ENCODE measurements at regions of chr4 and their contacts with region 1.

Region 1: GRCh38 chr4:55736605-55737183 is 82.9 kb upstream of the EXOC1L start:
- DNase-seq: peak; percentile 27
- H3K4me3 Mint-ChIP-seq: no peak overlapping the region
- H3K27ac Mint-ChIP-seq: no peak overlapping the region
- H3K4me1 Mint-ChIP-seq: peaks cover 11% of the 10 kb centered on the region
- H3K27me3 Mint-ChIP-seq: no peaks in the 10 kb centered on the region
- CTCF ChIP-seq: peak; percentile 47

Region 2: GRCh38 chr4:55312489-55313101 is 424.1 kb before region 1 on chr4:
- CTCF ChIA-PET with region 1: interaction called, 5 read pairs
- POLR2A ChIA-PET with region 1: no interaction called
- intact Hi-C with region 1: loop called (anchors 10 kb)
- DNase-seq: peak; percentile 65
- H3K4me3 Mint-ChIP-seq: no peak overlapping the region
- H3K27ac Mint-ChIP-seq: no peak overlapping the region
- H3K4me1 Mint-ChIP-seq: no peaks in the 10 kb centered on the region
- H3K27me3 Mint-ChIP-seq: no peaks in the 10 kb centered on the region
- CTCF ChIP-seq: peak; percentile 52

Region 3: DNA sequence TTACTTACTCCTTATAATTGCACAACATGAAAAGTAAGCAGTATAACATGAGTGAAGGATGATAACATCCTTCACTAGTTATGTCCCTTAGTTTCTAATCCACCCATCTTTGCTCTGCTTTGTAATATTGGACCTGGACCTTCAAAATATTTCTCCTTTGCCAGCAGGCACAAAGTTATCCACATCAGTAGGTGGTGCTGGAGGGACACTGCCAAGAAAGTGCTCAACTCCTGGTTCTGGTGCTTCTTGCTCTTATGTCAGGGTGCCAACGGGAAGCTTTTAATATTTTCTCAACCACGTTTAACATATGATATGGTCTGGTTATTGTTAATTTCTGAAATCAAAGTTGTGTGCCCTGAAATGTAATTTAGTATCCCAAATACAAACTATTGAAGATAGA is 291.9 kb before region 1 on chr4:
- CTCF ChIA-PET with region 1: interaction called, 22 read pairs
- POLR2A ChIA-PET with region 1: interaction called, 3 read pairs
- intact Hi-C with region 1: loop called (anchors 1 kb)
- DNase-seq: peak; percentile 43
- H3K4me3 Mint-ChIP-seq: no peak overlapping the region
- H3K27ac Mint-ChIP-seq: no peak overlapping the region
- H3K4me1 Mint-ChIP-seq: peaks cover 6% of the 10 kb centered on the region
- H3K27me3 Mint-ChIP-seq: no peaks in the 10 kb centered on the region
- CTCF ChIP-seq: peak; percentile 55

Region 4: DNA sequence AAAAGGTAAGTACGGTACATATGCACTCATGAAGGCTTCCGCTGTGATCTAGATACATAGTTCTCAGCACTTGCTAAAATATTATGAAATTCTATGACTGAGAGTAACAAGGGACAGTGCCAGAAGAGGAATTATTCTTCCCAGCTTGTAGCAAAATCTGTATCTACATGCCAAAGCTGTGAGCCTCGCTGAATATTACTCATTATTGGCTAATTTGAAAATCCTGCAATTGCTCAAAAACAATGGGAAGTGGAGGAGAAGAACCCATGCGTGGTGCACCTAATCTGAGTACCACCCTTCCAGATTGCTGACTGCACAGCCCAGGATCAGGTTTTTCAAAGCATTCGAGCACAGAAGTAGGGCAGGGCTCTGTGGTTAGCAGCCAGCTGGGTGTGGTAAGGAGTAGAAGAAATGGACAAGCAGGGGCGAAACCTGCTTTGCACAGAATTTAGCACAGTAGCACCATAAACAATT is 127.3 kb before region 1 on chr4:
- CTCF ChIA-PET with region 1: interaction called, 7 read pairs
- POLR2A ChIA-PET with region 1: interaction called, 24 read pairs
- intact Hi-C with region 1: no loop called
- DNase-seq: peak; percentile 94
- H3K4me3 Mint-ChIP-seq: peak overlapping the region; percentile 70
- H3K27ac Mint-ChIP-seq: peak overlapping the region; percentile 97
- H3K4me1 Mint-ChIP-seq: peaks cover 25% of the 10 kb centered on the region
- H3K27me3 Mint-ChIP-seq: no peaks in the 10 kb centered on the region
- CTCF ChIP-seq: no peak

Region 5: DNA sequence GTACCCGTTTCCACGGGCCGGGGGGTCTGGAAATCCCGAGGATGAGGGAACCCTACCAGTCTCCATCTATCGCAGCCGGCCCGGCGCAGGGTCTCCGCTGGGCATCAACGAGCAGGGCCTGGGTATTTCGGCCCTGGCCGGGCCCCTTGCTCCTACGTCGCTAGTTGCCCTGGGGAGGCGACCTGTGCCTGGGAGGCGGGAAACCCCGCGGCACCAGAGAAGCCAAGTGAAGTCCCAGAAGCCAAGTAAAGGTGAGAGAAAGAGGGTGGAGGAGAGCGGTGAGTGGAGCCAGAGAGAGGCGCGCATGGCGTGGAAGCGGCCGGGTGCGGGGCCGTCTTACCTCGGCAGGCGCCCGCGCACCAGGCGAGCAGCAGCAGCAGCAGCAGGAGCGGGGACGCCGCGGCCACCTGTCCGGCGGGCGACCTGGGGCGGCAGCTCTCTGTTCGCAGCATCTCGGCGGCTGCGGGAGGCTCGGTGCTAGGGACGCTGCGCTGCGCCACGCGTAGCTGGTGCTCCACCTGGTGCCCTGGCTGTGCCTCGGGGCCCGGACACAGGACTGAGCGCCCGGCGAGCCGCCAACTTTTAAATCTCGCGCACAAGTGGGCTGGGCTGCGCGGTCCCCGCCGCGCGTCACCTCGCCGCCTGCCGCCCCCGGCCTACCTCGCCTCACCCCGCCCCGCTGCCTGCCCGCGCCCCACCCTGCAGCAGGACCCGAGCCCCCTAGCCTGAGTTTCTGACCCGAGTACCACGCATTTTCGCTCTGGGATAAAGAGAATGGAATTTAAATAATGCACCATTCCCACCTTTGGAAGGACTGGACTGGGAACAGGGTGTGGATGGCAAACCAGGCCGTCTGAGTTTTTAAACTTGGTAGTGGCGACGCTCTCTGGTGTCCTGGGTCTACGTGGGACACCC is 100.7 kb before region 1 on chr4 and contains the start of gene NMU:
- CTCF ChIA-PET with region 1: interaction called, 6 read pairs
- POLR2A ChIA-PET with region 1: no interaction called
- intact Hi-C with region 1: loop called (anchors 10 kb)
- DNase-seq: peak; percentile 82
- H3K4me3 Mint-ChIP-seq: peak within 1 kb of the TSS; percentile 71
- H3K27ac Mint-ChIP-seq: no peak within 1 kb of the TSS
- H3K4me1 Mint-ChIP-seq: peaks cover 23% of the 10 kb centered on the region
- H3K27me3 Mint-ChIP-seq: no peaks in the 10 kb centered on the region
- CTCF ChIP-seq: peak; percentile 17
- total RNA-seq, gene NMU: 4.7 and 8.5 TPM in 2 replicates

Region 6: GRCh38 chr4:56077676-56078075 is 341.0 kb after region 1 on chr4:
- CTCF ChIA-PET with region 1: no interaction called
- POLR2A ChIA-PET with region 1: no interaction called
- intact Hi-C with region 1: no loop called
- DNase-seq: no peak
- H3K4me3 Mint-ChIP-seq: no peak overlapping the region
- H3K27ac Mint-ChIP-seq: no peak overlapping the region
- H3K4me1 Mint-ChIP-seq: no peaks in the 10 kb centered on the region
- H3K27me3 Mint-ChIP-seq: no peaks in the 10 kb centered on the region
- CTCF ChIP-seq: no peak

Measured in MCF 10A (cell line).